Esophagus muscularis mucosa (tissue), 4 donors: ENCODE measurements at regions of chr3 and their contacts with region 1.

Region 1: GRCh38 chr3:136196401-136197158 is 445 bp upstream of the MSL2 start:
- DNase-seq: peak; percentile 99
- H3K4me3 ChIP-seq: peak overlapping the region; percentile 89 to 95 (median 92)
- H3K27ac ChIP-seq: peak overlapping the region; percentile 99 to 100 (median 100)
- H3K4me1 ChIP-seq: peaks cover 20 to 41% (median 32%) of the 10 kb centered on the region in 4 donors
- H3K27me3 ChIP-seq: no peaks in the 10 kb centered on the region
- CTCF ChIP-seq: no peak
- EP300 ChIP-seq: no peak
- POLR2A ChIP-seq: peak; percentile 67

Region 2: GRCh38 chr3:136149667-136150066 is 46.9 kb before region 1 on chr3:
- intact Hi-C with region 1: loop called (anchors 5 kb)
- DNase-seq: no peak
- H3K4me3 ChIP-seq: no peak overlapping the region
- H3K27ac ChIP-seq: no peak overlapping the region
- H3K4me1 ChIP-seq: peaks cover 10 to 51% (median 44%) of the 10 kb centered on the region in 4 donors
- H3K27me3 ChIP-seq: no peaks in the 10 kb centered on the region
- CTCF ChIP-seq: no peak
- EP300 ChIP-seq: no peak
- POLR2A ChIP-seq: no peak

Region 3: GRCh38 chr3:136250226-136250902 is 53.8 kb after region 1 on chr3 and contains the start of gene PCCB:
- intact Hi-C with region 1: loop called (anchors 2 kb)
- DNase-seq: peak; percentile 98
- H3K4me3 ChIP-seq: peak within 1 kb of the TSS; percentile 65 to 87 (median 73)
- H3K27ac ChIP-seq: peak within 1 kb of the TSS; percentile 87 to 94 (median 92)
- H3K4me1 ChIP-seq: peaks cover 20 to 22% (median 21%) of the 10 kb centered on the region in 4 donors
- H3K27me3 ChIP-seq: no peaks in the 10 kb centered on the region
- CTCF ChIP-seq: peak; percentile 68 to 82 (median 76)
- EP300 ChIP-seq: no peak
- POLR2A ChIP-seq: peak; percentile 30
- total RNA-seq, gene PCCB: 25.8 to 35.6 (median 31.4) TPM

Region 4: GRCh38 chr3:136311975-136312374 is 115.4 kb after region 1 on chr3:
- intact Hi-C with region 1: no loop called
- DNase-seq: no peak
- H3K4me3 ChIP-seq: no peak overlapping the region
- H3K27ac ChIP-seq: no peak overlapping the region
- H3K4me1 ChIP-seq: no peaks in the 10 kb centered on the region
- H3K27me3 ChIP-seq: no peaks in the 10 kb centered on the region
- CTCF ChIP-seq: no peak
- EP300 ChIP-seq: no peak
- POLR2A ChIP-seq: no peak

Region 5: DNA sequence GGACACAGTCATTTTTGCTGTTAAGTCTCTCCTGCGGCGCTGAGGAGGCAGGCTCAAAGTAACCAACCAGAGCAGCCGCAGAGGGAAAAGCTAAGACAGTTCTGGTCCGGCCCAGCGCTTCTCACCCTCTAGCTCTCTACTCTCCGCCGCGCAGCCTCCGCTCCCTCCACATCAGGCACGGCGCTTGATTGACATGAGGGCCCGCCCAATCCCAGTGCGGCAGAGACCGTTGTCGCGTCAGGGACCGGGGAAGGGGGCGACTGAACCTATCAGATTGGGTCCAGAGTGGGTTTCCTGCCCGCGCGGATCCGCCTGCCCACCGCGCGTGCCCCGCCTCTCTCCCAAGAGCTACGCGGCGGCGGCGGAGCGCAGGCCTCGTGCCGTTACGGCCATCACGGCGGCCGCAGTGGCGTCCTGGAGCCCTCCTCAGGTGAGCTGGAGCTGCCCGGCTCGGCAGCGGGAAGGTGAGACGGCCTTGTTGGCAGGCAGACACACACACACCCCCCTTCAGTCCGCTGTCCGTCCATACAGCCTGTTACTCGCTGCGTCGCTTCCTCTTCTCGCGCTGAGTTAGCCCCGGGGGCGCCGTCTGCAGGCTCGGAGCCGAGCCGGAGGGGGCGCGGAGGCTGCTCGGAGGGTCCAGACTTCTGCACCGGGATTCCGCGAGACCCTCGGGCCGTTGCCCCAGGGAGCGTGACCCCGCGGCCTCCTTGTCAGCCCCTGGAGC is 665.5 kb after region 1 on chr3 and contains the start of gene NCK1:
- intact Hi-C with region 1: loop called (anchors 10 kb)
- DNase-seq: peak; percentile 99
- H3K4me3 ChIP-seq: peak within 1 kb of the TSS; percentile 82 to 92 (median 86)
- H3K27ac ChIP-seq: peak within 1 kb of the TSS; percentile 94 to 96 (median 95)
- H3K4me1 ChIP-seq: peaks cover 17 to 32% (median 27%) of the 10 kb centered on the region in 4 donors
- H3K27me3 ChIP-seq: no peaks in the 10 kb centered on the region
- CTCF ChIP-seq: peak in 1 of 3 experiments; percentile 18
- EP300 ChIP-seq: no peak
- POLR2A ChIP-seq: no peak
- total RNA-seq, gene NCK1: 28.9 to 54.0 (median 37.0) TPM